Left colon (tissue), 2 donors: ENCODE measurements at regions of chr7 and their contacts with region 1.

Region 1: GRCh38 chr7:141654551-141654950 is 47.4 kb downstream of the DENND11 start:
- DNase-seq: peak; percentile 56 to 70
- ATAC-seq: peak; percentile 94

Region 2: GRCh38 chr7:140945940-140946339 is 708.6 kb before region 1 on chr7:
- intact Hi-C with region 1: no loop called
- DNase-seq: no peak
- ATAC-seq: no peak

Region 3: GRCh38 chr7:141737834-141738591 is 83.5 kb after region 1 on chr7 and contains the start of gene SSBP1:
- intact Hi-C with region 1: loop called in 1 of 2 experiments (anchors 10 kb)
- DNase-seq: peak; percentile 89 to 91
- ATAC-seq: peak; percentile 96
- total RNA-seq, gene SSBP1: 65.4 to 79.5 TPM